ENCODE measurements at regions of chr5 and their contacts with region 1.

Region 1: GRCh38 chr5:126837906-126838539 is 61.1 kb downstream of the LMNB1 start:
- DNase-seq: peak in 1 of 2 donors; percentile 42
- H3K4me3 ChIP-seq: no peak overlapping the region
- H3K27ac ChIP-seq: no peak overlapping the region
- H3K4me1 ChIP-seq: no peaks in the 10 kb centered on the region
- H3K27me3 ChIP-seq: no peaks in the 10 kb centered on the region
- CTCF ChIP-seq: peak in 2 of 7 experiments; percentile 18 to 28
- EP300 ChIP-seq: no peak
- POLR2A ChIP-seq: no peak

Region 2: GRCh38 chr5:127313847-127314473 is 475.9 kb after region 1 on chr5:
- intact Hi-C with region 1: loop called (anchors 10 kb)
- DNase-seq: peak; percentile 64 to 71
- H3K4me3 ChIP-seq: no peak overlapping the region
- H3K27ac ChIP-seq: no peak overlapping the region
- H3K4me1 ChIP-seq: no peaks in the 10 kb centered on the region
- H3K27me3 ChIP-seq: no peaks in the 10 kb centered on the region
- CTCF ChIP-seq: peak in 5 of 7 experiments; percentile 32 to 71 (median 49)
- EP300 ChIP-seq: no peak
- POLR2A ChIP-seq: no peak

Measured in stomach (tissue), 19 donors.